Heart right ventricle (tissue), 16 donors: ENCODE measurements at regions of chr1 and their contacts with region 1.

Region 1: DNA sequence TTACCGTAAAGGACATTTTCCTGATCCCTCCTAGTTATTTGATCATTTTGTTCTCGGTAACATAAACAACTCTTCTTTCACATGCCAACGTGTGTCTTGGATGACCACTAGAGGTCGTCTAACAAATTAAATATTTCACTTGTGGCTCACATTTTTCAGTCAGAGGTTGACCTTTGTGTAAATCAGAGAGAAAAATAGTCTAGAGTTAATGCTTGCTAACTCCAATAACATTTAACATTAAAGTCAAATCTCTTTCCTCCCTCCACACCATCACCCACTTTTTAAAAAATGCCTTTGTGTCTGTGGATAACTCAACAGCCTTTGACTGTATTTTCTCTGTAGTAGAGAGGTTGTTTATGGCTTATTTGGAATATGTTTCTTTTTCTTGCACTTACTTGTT is 220.5 kb upstream of the B3GALT2 start:
- DNase-seq: no peak
- ATAC-seq: peak in 2 of 8 donors; percentile 30 to 54
- H3K4me3 ChIP-seq: no peak overlapping the region
- H3K27ac ChIP-seq: peak overlapping the region in 4 of 10 donors; percentile 1 to 7 (median 2)
- H3K4me1 ChIP-seq: peaks cover 0 to 29% (median 11%) of the 10 kb centered on the region in 9 donors
- H3K27me3 ChIP-seq: no peaks in the 10 kb centered on the region
- CTCF ChIP-seq: peak; percentile 35 to 81 (median 74)

Region 2: GRCh38 chr1:193183019-193183627 is 223.8 kb before region 1 on chr1:
- intact Hi-C with region 1: loop called in 6 of 10 experiments (anchors 5 to 10 kb)
- DNase-seq: peak in 1 of 2 donors; percentile 17
- ATAC-seq: peak in 4 of 8 donors; percentile 55 to 63 (median 56)
- H3K4me3 ChIP-seq: peak overlapping the region in 9 of 10 donors; percentile 30 to 55 (median 49)
- H3K27ac ChIP-seq: peak overlapping the region in 6 of 10 donors; percentile 1 to 81 (median 42)
- H3K4me1 ChIP-seq: peaks cover 0 to 78% (median 31%) of the 10 kb centered on the region in 9 donors
- H3K27me3 ChIP-seq: no peaks in the 10 kb centered on the region
- CTCF ChIP-seq: peak; percentile 73 to 92 (median 83)

Region 3: GRCh38 chr1:193589597-193590040 is 182.7 kb after region 1 on chr1:
- intact Hi-C with region 1: loop called in 1 of 10 experiments (anchors 10 kb)
- DNase-seq: peak; percentile 11 to 16
- ATAC-seq: peak; percentile 52 to 86 (median 78)
- H3K4me3 ChIP-seq: peak overlapping the region in 1 of 10 donors; percentile 10
- H3K27ac ChIP-seq: peak overlapping the region in 9 of 10 donors; percentile 8 to 74 (median 62)
- H3K4me1 ChIP-seq: peaks cover 0 to 48% (median 11%) of the 10 kb centered on the region in 9 donors
- H3K27me3 ChIP-seq: no peaks in the 10 kb centered on the region
- CTCF ChIP-seq: no peak

Region 4: DNA sequence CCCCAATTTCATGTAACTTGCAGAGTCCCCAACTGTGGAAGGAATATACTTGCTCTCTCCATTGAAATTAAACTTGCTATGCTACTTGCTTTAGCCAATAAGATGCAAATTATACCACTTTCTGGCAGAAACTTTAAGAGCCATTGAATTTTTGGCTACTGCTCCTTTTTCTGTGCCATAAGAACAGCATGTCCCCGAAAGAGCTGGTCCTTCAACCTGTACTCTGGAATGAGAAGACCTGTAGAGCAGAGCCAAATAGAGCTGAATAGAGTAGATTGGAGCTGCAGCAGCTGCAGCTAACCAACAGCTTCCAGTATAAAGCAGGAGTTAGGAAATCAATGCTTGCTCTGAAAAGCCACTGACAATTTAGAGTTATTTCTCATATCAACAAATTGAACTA is 251.8 kb after region 1 on chr1:
- intact Hi-C with region 1: loop called in 1 of 10 experiments (anchors 10 kb)
- DNase-seq: no peak
- ATAC-seq: no peak
- H3K4me3 ChIP-seq: no peak overlapping the region
- H3K27ac ChIP-seq: peak overlapping the region in 4 of 10 donors; percentile 1 to 8 (median 5)
- H3K4me1 ChIP-seq: peaks cover 0 to 26% (median 0%) of the 10 kb centered on the region in 9 donors
- H3K27me3 ChIP-seq: no peaks in the 10 kb centered on the region
- CTCF ChIP-seq: no peak

Region 5: GRCh38 chr1:193754732-193755427 is 348.0 kb after region 1 on chr1:
- intact Hi-C with region 1: loop called in 1 of 10 experiments (anchors 10 kb)
- DNase-seq: no peak
- ATAC-seq: no peak
- H3K4me3 ChIP-seq: no peak overlapping the region
- H3K27ac ChIP-seq: no peak overlapping the region
- H3K4me1 ChIP-seq: no peaks in the 10 kb centered on the region
- H3K27me3 ChIP-seq: no peaks in the 10 kb centered on the region
- CTCF ChIP-seq: peak in 2 of 9 donors; percentile 14 to 36

Region 6: GRCh38 chr1:194052514-194053333 is 645.8 kb after region 1 on chr1:
- intact Hi-C with region 1: loop called in 1 of 10 experiments (anchors 10 kb)
- DNase-seq: no peak
- ATAC-seq: no peak
- H3K4me3 ChIP-seq: no peak overlapping the region
- H3K27ac ChIP-seq: no peak overlapping the region
- H3K4me1 ChIP-seq: peaks cover 0 to 18% (median 6%) of the 10 kb centered on the region in 9 donors
- H3K27me3 ChIP-seq: no peaks in the 10 kb centered on the region
- CTCF ChIP-seq: no peak

Region 7: GRCh38 chr1:194295685-194296084 is 888.8 kb after region 1 on chr1:
- intact Hi-C with region 1: loop called in 2 of 10 experiments (anchors 5 to 10 kb)
- DNase-seq: peak in 1 of 2 donors; percentile 7
- ATAC-seq: peak in 6 of 8 donors; percentile 44 to 81 (median 70)
- H3K4me3 ChIP-seq: no peak overlapping the region
- H3K27ac ChIP-seq: no peak overlapping the region
- H3K4me1 ChIP-seq: no peaks in the 10 kb centered on the region
- H3K27me3 ChIP-seq: no peaks in the 10 kb centered on the region
- CTCF ChIP-seq: peak; percentile 24 to 67 (median 54)